GM12878 (cell line): ENCODE measurements at regions of chr10 and their contacts with region 1.

Region 1: GRCh38 chr10:79242620-79243152 is 104.6 kb upstream of the PPIF start:
- DNase-seq: no peak
- ATAC-seq: peak; percentile 39
- H3K4me3 ChIP-seq: peak overlapping the region; percentile 90
- H3K27ac ChIP-seq: peak overlapping the region; percentile 75
- H3K4me1 ChIP-seq: peaks cover 40% of the 10 kb centered on the region
- H3K27me3 ChIP-seq: no peaks in the 10 kb centered on the region
- CTCF ChIP-seq: no peak
- EP300 ChIP-seq: no peak
- POLR2A ChIP-seq: peak; percentile 86
- RAD21 ChIP-seq: no peak

Region 2: DNA sequence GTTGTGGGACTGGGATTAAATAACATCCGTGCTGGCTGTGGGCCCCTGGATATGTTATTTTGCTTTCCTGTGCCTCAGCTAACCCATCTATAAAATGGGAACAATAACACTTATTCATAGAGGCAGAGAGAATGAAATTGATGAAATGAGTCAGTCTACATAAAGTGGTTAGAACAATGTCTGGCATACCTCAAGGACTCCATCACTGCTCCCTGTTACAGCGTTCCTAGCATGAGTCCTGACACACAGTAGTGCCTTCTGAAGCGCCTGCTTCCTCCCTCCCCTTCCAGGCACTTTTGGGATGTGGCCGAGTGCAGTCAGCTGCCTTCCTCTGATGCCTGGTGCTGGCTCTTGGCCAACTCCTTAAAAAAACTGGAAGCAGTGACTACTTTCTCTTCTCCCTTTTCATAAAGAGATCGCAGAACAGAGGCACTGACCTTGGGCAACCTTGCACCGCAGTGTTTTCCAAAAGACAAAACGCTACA is 282.3 kb before region 1 on chr10:
- CTCF ChIA-PET with region 1: no interaction called
- POLR2A ChIA-PET with region 1: no interaction called
- RAD21 ChIA-PET with region 1: no interaction called
- SMC1A ChIA-PET with region 1: no interaction called
- in situ Hi-C with region 1: no loop called
- intact Hi-C with region 1: no loop called
- DNase-seq: no peak
- ATAC-seq: no peak
- H3K4me3 ChIP-seq: no peak overlapping the region
- H3K27ac ChIP-seq: no peak overlapping the region
- H3K4me1 ChIP-seq: no peaks in the 10 kb centered on the region
- H3K27me3 ChIP-seq: peaks cover 2 to 5% of the 10 kb centered on the region in 2 experiments; a peak in 2 of 4 replicates
- CTCF ChIP-seq: no peak
- EP300 ChIP-seq: no peak
- POLR2A ChIP-seq: no peak
- RAD21 ChIP-seq: no peak

Region 3: GRCh38 chr10:79266543-79267312 is 24.0 kb after region 1 on chr10:
- CTCF ChIA-PET with region 1: interaction called, 42 read pairs
- POLR2A ChIA-PET with region 1: interaction called, 6 read pairs
- RAD21 ChIA-PET with region 1: interaction called, 48 read pairs
- SMC1A ChIA-PET with region 1: interaction called, 114 read pairs
- in situ Hi-C with region 1: no loop called
- intact Hi-C with region 1: no loop called
- DNase-seq: peak; percentile 81
- ATAC-seq: peak; percentile 89
- H3K4me3 ChIP-seq: peak overlapping the region; percentile 19; the same call in 1 of the 2 replicates
- H3K27ac ChIP-seq: peak overlapping the region; percentile 91
- H3K4me1 ChIP-seq: peaks cover 65% of the 10 kb centered on the region
- H3K27me3 ChIP-seq: no peaks in the 10 kb centered on the region
- CTCF ChIP-seq: no peak
- EP300 ChIP-seq: peak; percentile 62 to 91; a peak in 3 of 4 replicates
- POLR2A ChIP-seq: no peak
- RAD21 ChIP-seq: no peak